ENCODE measurements at regions of chr7 and their contacts with region 1.

Region 1: GRCh38 chr7:144835652-144836544 is at the start of gene TPK1:
- DNase-seq: peak; percentile 94
- ATAC-seq: peak; percentile 87
- H3K4me3 Mint-ChIP-seq: peak within 1 kb of the TSS; percentile 91
- H3K27ac Mint-ChIP-seq: peak within 1 kb of the TSS; percentile 99
- H3K4me1 Mint-ChIP-seq: peaks cover 36% of the 10 kb centered on the region
- H3K27me3 Mint-ChIP-seq: no peaks in the 10 kb centered on the region
- total RNA-seq, gene TPK1: 16.5 to 16.6 TPM

Region 2: DNA sequence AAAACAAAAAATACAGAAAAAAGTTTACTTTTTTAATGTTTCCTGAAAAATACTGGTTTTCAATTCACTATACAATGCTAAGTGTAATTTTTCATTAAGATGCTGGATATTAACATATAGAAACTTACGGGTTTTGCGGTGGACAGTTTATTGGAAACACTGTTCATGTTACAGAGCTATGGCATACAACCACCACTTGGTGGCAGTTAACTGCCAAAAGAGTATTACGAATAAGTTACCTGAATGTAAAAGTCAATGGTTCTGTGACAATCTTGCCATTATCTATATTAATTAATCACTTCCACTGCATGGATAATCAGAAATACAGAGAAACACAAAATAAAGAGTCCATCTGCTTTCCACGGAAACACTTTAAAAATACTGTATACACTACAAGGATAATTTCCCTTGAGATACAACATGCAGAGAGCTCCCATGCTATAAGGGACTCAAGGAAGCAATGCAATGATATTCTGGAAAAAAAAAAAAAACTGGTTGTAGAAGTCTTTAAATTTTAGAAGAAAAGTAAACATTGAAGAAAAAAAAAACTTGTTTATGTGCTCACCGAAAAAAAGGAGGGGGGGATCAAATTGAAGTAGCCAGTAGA is 97.1 kb before region 1 on chr7:
- CTCF ChIA-PET with region 1: interaction called, 6 read pairs
- POLR2A ChIA-PET with region 1: interaction called, 6 read pairs
- intact Hi-C with region 1: loop called (anchors 1 to 5 kb)
- DNase-seq: peak; percentile 11
- ATAC-seq: peak; percentile 66
- H3K4me3 Mint-ChIP-seq: no peak overlapping the region
- H3K27ac Mint-ChIP-seq: no peak overlapping the region
- H3K4me1 Mint-ChIP-seq: no peaks in the 10 kb centered on the region
- H3K27me3 Mint-ChIP-seq: no peaks in the 10 kb centered on the region

Region 3: DNA sequence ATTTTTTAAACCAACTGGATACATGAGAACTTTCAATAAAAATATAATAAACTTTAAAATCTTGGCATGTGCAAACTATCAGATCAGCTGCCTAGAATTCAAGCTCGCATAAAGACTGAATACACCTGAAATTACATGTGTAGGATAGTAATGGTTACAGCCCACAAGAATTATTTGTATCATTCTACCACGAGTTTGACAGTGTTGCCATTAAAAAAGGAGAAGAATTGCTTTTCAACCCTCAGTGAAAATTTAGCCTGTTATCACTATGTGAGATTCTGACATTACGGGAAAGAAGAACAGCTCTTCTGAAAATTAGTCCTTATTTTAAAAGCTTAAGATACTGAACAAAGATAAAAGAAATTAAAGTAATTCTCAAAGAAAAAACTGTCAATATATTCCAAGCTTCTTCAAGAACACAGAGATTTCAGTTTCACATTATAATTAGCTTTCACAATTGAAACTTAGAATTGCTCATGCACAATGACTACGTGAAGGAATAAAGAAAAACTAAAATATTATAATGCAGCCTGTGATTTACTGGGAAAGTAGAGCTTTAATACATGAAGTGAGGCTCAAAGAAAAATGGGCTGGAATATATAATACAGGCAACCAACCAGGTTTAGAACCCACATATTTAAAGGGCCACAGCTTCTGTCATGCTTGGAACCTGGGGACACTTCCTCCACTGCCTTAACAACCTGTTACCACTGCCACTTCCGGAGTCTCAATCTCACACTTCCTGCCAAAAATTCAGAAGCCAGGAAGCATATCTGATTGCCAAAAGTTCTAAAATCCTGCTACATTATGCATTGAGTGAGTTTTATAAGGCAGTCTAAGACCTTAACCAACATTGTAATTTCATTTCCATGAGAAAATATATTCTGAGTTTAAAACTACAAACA is 23.3 kb before region 1 on chr7:
- CTCF ChIA-PET with region 1: interaction called, 6 read pairs
- POLR2A ChIA-PET with region 1: interaction called, 22 read pairs
- intact Hi-C with region 1: loop called (anchors 1 to 2 kb)
- DNase-seq: peak; percentile 57
- ATAC-seq: peak; percentile 95
- H3K4me3 Mint-ChIP-seq: peak overlapping the region; percentile 68
- H3K27ac Mint-ChIP-seq: peak overlapping the region; percentile 93
- H3K4me1 Mint-ChIP-seq: peaks cover 68% of the 10 kb centered on the region
- H3K27me3 Mint-ChIP-seq: no peaks in the 10 kb centered on the region

Region 4: DNA sequence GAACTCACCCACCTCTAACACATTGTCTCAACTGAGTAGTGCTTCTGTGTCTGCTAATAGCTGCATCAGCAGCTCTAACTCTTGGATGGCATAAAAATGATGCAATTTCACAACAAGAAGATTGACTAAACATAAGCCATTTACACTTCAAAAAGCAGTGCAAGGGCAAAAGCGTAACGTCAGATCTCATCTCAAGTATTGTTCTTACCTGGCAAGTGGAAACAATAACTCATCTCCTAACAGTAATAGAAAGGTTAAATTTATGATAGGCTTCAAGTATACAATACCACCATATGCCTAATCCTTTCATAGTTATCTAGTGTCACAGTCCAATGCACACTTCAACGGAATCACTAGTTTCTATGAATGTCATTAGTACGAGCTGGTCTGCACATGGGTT is 14.8 kb before region 1 on chr7:
- CTCF ChIA-PET with region 1: interaction called, 12 read pairs
- POLR2A ChIA-PET with region 1: interaction called, 16 read pairs
- intact Hi-C with region 1: loop called (anchors 1 kb)
- DNase-seq: peak; percentile 40
- ATAC-seq: peak; percentile 83
- H3K4me3 Mint-ChIP-seq: peak overlapping the region; percentile 26
- H3K27ac Mint-ChIP-seq: peak overlapping the region; percentile 98
- H3K4me1 Mint-ChIP-seq: peaks cover 87% of the 10 kb centered on the region
- H3K27me3 Mint-ChIP-seq: no peaks in the 10 kb centered on the region

Measured in activated CD4-positive, alpha-beta T cell treated with anti-CD3 and anti-CD28 coated beads for 36 hours (primary cell).